ENCODE measurements at regions of chr3 and their contacts with region 1.

Region 1: GRCh38 chr3:154235330-154235729 is 89.0 kb downstream of the DHX36 start:
- DNase-seq: no peak
- H3K4me3 Mint-ChIP-seq: no peak overlapping the region
- H3K27ac Mint-ChIP-seq: no peak overlapping the region
- H3K4me1 Mint-ChIP-seq: peaks cover 21% of the 10 kb centered on the region
- H3K27me3 Mint-ChIP-seq: no peaks in the 10 kb centered on the region

Region 2: DNA sequence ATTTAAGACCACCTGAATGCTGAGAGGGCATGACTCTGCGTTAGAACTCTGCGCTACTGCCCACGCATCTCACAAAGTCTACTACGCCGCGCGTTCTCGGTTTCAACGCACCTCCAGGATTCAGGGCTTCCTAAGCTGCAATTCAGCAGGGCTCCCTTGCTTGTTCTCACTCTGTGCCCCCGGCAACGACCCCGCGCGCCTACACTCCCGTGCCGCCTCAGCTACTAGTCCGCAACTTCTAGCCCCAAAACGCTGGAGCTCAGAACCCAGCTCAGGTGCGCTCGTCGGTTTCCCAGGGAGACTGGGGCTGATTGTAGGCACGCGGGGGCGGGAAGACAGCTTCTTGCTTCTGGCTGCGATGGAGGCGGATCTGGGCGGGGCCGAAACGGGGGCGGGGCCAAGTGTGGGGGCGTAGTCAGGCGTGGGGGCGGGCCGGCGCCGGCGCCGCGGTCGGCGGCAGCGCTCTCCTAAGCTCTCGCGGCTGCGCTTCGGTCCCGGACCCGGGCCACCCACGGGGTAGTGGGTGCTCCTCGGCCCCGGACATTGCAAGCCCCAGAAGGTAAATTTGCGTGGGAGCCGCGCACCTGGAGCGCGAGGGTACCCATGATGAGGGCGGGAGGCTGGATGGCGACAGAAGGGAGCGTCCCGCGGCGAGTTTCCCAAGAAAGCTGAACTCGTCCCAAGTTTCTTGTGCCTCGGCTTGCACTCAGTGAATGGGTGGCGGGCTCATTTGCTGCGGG is 114.2 kb before region 1 on chr3 and contains the start of gene ARHGEF26:
- intact Hi-C with region 1: loop called (anchors 5 kb)
- DNase-seq: peak; percentile 72
- H3K4me3 Mint-ChIP-seq: peak within 1 kb of the TSS; percentile 77
- H3K27ac Mint-ChIP-seq: no peak within 1 kb of the TSS
- H3K4me1 Mint-ChIP-seq: peaks cover 13% of the 10 kb centered on the region
- H3K27me3 Mint-ChIP-seq: peaks cover 53% of the 10 kb centered on the region
- total RNA-seq, gene ARHGEF26: 0.18 and 0.28 TPM in 2 replicates

Measured in activated T-helper 2 cell treated with anti-CD3 and anti-CD28 coated beads, Interferon-gamma antibody, Interleukin-2, Interleukin-4, amounts not matched to agents 10 μg/mL and 5 μg/mL and 100 μg/mL, durations not matched to agents 14 hours and 24 hours and 36 hours (primary cell).